ENCODE measurements at regions of chr20 and their contacts with region 1.

Region 1: GRCh38 chr20:19784511-19785172 is 26.6 kb downstream of the RIN2 start:
- DNase-seq: peak; percentile 78
- H3K4me3 ChIP-seq: no peak overlapping the region
- H3K27ac ChIP-seq: peak overlapping the region; percentile 21 to 64 (median 54)
- H3K4me1 ChIP-seq: peaks cover 0 to 33% (median 30%) of the 10 kb centered on the region in 4 donors
- H3K27me3 ChIP-seq: no peaks in the 10 kb centered on the region
- CTCF ChIP-seq: peak; percentile 67 to 84 (median 80)
- EP300 ChIP-seq: no peak
- POLR2A ChIP-seq: no peak

Region 2: DNA sequence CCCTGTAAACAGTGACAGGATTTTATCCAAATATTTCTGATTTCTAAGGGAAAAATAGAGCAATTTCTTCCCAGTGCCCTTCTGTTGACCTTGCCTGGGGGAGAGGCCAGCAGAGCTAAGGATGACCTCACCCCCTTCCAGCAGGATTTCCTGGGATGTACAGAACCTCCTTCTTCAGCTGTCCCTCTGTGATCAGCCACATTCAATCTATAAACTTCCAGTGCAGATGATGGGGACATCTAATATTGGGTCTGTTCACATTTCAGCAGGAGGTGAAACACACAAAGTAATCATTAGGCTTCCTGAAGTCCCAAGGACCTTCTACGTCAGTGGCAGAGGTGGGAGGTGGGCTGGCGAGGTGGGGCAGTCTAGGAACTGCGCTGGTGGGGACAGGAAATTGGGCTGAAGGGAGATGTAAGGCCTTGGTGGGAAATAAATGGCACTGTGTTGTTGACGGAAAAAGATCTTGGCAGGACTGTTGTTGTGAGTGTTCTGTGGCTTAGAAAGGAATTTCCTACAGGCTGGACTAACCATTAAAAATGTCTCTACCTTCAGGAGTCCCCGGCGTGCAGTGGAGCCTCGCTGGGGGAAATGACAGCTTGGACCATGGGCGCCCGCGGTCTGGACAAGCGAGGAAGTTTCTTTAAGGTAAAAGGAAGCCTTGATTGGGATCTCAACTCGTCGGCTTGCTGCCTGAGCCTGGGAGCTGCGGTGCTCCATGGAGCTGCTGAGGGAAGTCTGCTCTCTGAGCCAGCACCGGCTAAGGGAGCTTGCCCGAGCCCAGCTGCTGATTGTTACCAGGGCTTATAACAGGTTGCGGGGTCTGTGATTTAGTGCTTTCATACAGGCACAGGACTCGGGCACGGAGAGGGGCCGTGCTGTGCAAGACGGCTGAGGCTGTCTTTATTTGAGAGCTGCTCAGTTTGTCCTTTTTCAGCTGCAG is 104.6 kb after region 1 on chr20:
- intact Hi-C with region 1: loop called (anchors 5 kb)
- DNase-seq: peak; percentile 77
- H3K4me3 ChIP-seq: peak overlapping the region in 3 of 4 donors; percentile 33 to 43 (median 35)
- H3K27ac ChIP-seq: peak overlapping the region; percentile 80 to 87 (median 85)
- H3K4me1 ChIP-seq: peaks cover 0 to 64% (median 53%) of the 10 kb centered on the region in 4 donors
- H3K27me3 ChIP-seq: no peaks in the 10 kb centered on the region
- CTCF ChIP-seq: no peak
- EP300 ChIP-seq: no peak
- POLR2A ChIP-seq: no peak